ENCODE measurements at regions of chr3 and their contacts with region 1.

Region 1: DNA sequence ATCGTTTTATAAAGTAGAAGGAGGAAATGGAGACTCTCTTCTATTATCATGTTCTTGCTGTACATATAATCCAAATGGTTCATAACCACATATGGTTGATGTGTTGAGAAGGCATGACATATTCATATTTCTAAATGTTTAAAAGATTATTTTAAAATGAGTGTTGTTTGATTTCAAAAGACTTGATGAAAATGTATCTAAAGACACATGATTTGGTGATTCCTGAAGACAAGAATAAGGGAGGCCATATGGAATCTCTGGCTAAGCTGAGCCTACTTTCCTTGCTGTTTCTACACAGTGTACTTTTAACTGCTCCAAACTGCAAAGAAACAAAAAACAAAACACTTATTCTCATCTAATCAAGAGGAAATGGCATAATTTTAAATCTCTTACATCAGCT is 23.0 kb upstream of the GYG1 start:
- DNase-seq: no peak

Region 2: GRCh38 chr3:148950806-148951205 is 17.5 kb before region 1 on chr3:
- intact Hi-C with region 1: no loop called
- DNase-seq: no peak

Region 3: GRCh38 chr3:149016669-149017541 is 48.6 kb after region 1 on chr3:
- intact Hi-C with region 1: loop called in 1 of 2 experiments (anchors 2 kb)
- DNase-seq: no peak

Measured in posterior vena cava (tissue), 2 donors.